K562 (cell line): ENCODE measurements at regions of chr16 and their contacts with region 1.

Region 1: GRCh38 chr16:2500918-2501750 is 12.6 kb upstream of the ATP6V0C start:
- DNase-seq: peak; percentile 81 to 85 (median 84)
- ATAC-seq: peak; percentile 94
- H3K4me3 ChIP-seq: no peak overlapping the region
- H3K27ac ChIP-seq: no peak overlapping the region
- H3K4me1 ChIP-seq: peaks cover 17 to 70% of the 10 kb centered on the region in 2 experiments
- H3K27me3 ChIP-seq: no peaks in the 10 kb centered on the region
- CTCF ChIP-seq: peak; percentile 92 to 95 (median 95)
- EP300 ChIP-seq: no peak
- POLR2A ChIP-seq: no peak
- RAD21 ChIP-seq: peak; percentile 91 to 93

Region 2: DNA sequence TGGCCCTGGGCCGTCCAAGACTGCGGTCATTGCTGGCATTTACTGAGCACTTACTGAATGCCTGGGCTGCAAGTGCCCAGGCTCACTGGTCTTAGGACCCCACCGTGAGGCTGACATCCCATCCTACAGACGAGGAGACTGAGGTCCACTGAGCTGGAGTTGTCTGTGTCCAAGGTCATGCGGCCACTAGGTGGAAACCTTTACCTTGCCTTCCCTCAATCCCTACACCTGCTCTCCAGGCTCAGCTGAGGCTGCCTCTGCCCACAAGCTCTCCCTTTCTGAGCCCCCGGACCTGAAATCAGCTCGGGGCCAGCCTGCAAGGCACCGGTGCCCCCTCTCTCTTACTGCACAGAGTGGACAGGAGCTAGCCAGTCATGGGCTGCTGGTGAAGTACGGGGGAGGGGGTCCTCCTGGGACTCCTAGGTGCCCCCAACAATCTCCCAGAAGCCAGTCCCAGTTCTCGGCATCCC is 306.2 kb before region 1 on chr16:
- CTCF ChIA-PET with region 1: interaction called, 5 read pairs
- POLR2A ChIA-PET with region 1: no interaction called
- in situ Hi-C with region 1: no loop called
- intact Hi-C with region 1: loop called (anchors 5 kb)
- DNase-seq: peak in 3 of 4 experiments; percentile 45 to 83 (median 73)
- ATAC-seq: peak; percentile 90
- H3K4me3 ChIP-seq: no peak overlapping the region
- H3K27ac ChIP-seq: no peak overlapping the region
- H3K4me1 ChIP-seq: peaks cover 3 to 65% of the 10 kb centered on the region in 2 experiments; a peak in 4 of 5 replicates
- H3K27me3 ChIP-seq: peaks cover 0 to 5% of the 10 kb centered on the region in 2 experiments; a peak in 2 of 5 replicates
- CTCF ChIP-seq: peak; percentile 67 to 84 (median 75)
- EP300 ChIP-seq: no peak
- POLR2A ChIP-seq: no peak
- RAD21 ChIP-seq: peak; percentile 67 to 86

Region 3: GRCh38 chr16:2296661-2297505 is 204.3 kb before region 1 on chr16:
- CTCF ChIA-PET with region 1: interaction called, 12 read pairs
- POLR2A ChIA-PET with region 1: interaction called, 4 read pairs
- in situ Hi-C with region 1: no loop called
- intact Hi-C with region 1: loop called (anchors 1 kb)
- DNase-seq: peak; percentile 76 to 87 (median 84)
- ATAC-seq: peak; percentile 98
- H3K4me3 ChIP-seq: no peak overlapping the region
- H3K27ac ChIP-seq: peak overlapping the region; percentile 76
- H3K4me1 ChIP-seq: peaks cover 6 to 24% of the 10 kb centered on the region in 2 experiments; a peak in 4 of 5 replicates
- H3K27me3 ChIP-seq: no peaks in the 10 kb centered on the region
- CTCF ChIP-seq: peak; percentile 79 to 87 (median 86)
- EP300 ChIP-seq: peak; percentile 19; the same call in 1 of the 2 replicates
- POLR2A ChIP-seq: no peak
- RAD21 ChIP-seq: peak; percentile 65 to 84

Region 4: GRCh38 chr16:2340564-2341455 is 160.3 kb before region 1 on chr16 and contains the start of gene ABCA3:
- CTCF ChIA-PET with region 1: interaction called, 9 read pairs
- POLR2A ChIA-PET with region 1: no interaction called
- in situ Hi-C with region 1: no loop called
- intact Hi-C with region 1: loop called (anchors 10 kb)
- DNase-seq: peak; percentile 98 to 99 (median 99)
- ATAC-seq: peak; percentile 90
- H3K4me3 ChIP-seq: peak within 1 kb of the TSS; percentile 96
- H3K27ac ChIP-seq: peak within 1 kb of the TSS; percentile 88
- H3K4me1 ChIP-seq: peaks cover 23 to 43% of the 10 kb centered on the region in 2 experiments
- H3K27me3 ChIP-seq: no peaks in the 10 kb centered on the region
- CTCF ChIP-seq: peak; percentile 98 to 100 (median 99)
- EP300 ChIP-seq: peak; percentile 36; the same call in 1 of the 2 replicates
- POLR2A ChIP-seq: no peak
- RAD21 ChIP-seq: peak; percentile 86 to 89
- polyA plus RNA-seq, gene ABCA3: 0.66 to 0.81 TPM

Region 5: DNA sequence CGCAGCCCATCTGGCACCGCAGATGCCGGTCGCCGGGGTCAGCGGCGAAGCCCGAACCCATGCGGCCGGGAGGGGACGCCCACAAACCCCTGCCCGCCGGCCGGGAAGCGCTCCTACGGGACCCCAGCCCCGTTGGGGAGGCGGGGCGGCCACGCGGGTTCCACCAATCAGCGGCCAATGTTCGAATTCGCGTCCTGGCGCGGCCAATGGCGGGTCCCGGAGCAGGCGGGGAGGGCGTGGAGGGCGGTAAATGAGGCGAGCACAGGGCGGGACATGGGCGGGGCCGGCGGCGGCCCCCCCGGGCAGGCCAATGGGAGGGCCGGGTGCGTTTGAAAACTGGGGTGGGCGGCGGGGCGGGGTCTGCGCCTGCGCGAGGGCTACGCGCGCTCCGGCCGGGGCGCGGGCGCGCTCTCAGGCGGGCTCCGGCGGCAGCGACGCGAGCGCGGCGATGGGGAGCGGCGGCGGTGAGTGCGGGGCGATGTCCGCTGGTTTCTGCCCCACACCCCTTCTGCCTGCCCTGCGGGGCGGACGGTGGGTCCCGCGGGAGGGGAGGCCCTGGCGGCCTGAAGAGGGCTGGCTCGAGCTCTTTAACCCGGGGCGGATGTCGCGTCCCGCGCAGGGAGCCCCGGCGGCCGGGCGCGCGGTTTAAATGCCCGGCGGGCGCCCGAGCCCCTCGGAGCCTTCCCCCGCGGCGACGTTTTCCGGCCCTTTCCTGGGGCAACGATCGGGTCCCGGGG is 71.9 kb before region 1 on chr16 and contains the start of gene CCNF:
- CTCF ChIA-PET with region 1: interaction called, 17 read pairs
- POLR2A ChIA-PET with region 1: no interaction called
- in situ Hi-C with region 1: no loop called
- intact Hi-C with region 1: loop called (anchors 2 kb)
- DNase-seq: peak; percentile 98 to 100 (median 98)
- ATAC-seq: peak; percentile 93
- H3K4me3 ChIP-seq: peak within 1 kb of the TSS; percentile 93
- H3K27ac ChIP-seq: peak within 1 kb of the TSS; percentile 98
- H3K4me1 ChIP-seq: peaks cover 21 to 34% of the 10 kb centered on the region in 2 experiments; a peak in 4 of 5 replicates
- H3K27me3 ChIP-seq: no peaks in the 10 kb centered on the region
- CTCF ChIP-seq: no peak
- EP300 ChIP-seq: no peak
- POLR2A ChIP-seq: peak; percentile 21
- RAD21 ChIP-seq: no peak; a peak in 1 of 4 replicates
- polyA plus RNA-seq, gene CCNF: 4.1 to 5.4 TPM

Region 6: DNA sequence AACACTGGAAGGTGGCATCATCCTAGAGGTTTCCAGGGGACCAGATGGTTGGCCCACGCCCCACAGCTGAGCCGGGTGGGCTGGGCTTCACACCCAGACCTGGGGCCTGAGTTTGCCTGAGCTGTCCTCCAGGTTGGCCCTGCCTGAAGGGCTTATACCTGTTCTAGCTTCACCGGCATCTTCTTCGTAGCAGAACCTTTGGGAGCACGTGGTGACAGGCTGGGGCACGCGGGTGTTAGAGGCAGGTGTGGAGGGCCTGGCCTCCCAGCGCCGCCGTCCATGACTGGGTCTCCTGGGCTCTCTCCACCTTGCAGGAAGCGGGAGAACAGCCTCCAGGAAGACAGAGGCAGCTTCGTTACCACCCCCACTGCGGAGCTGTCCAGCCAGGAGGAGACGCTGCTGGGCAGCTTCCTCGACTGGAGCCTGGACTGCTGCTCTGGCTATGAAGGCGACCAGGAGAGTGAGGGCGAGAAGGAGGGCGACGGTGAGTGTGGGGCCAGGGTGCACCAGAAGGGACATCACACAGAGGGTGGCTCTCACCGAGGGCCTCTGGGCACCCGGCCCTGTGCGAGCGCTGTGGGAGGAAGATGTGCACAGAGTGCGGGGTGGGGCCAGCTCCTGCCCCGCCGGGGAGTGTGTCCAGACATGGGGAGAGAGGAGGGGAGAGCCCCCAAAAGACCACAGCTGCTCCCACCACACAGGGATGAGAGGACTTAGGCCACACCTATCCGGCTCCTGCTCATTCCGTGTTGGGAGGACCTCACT is 45.9 kb before region 1 on chr16:
- CTCF ChIA-PET with region 1: no interaction called
- POLR2A ChIA-PET with region 1: no interaction called
- in situ Hi-C with region 1: no loop called
- intact Hi-C with region 1: no loop called
- DNase-seq: no peak
- ATAC-seq: no peak
- H3K4me3 ChIP-seq: no peak overlapping the region
- H3K27ac ChIP-seq: no peak overlapping the region
- H3K4me1 ChIP-seq: peaks cover 0 to 58% of the 10 kb centered on the region in 2 experiments; a peak in 4 of 5 replicates
- H3K27me3 ChIP-seq: no peaks in the 10 kb centered on the region; a peak in 1 of 5 replicates
- CTCF ChIP-seq: no peak
- EP300 ChIP-seq: no peak
- POLR2A ChIP-seq: no peak
- RAD21 ChIP-seq: no peak

Region 7: GRCh38 chr16:2467521-2468151 is 33.5 kb before region 1 on chr16:
- CTCF ChIA-PET with region 1: no interaction called
- POLR2A ChIA-PET with region 1: interaction called, 3 read pairs
- in situ Hi-C with region 1: no loop called
- intact Hi-C with region 1: loop called (anchors 5 kb)
- DNase-seq: no peak
- ATAC-seq: no peak
- H3K4me3 ChIP-seq: no peak overlapping the region
- H3K27ac ChIP-seq: no peak overlapping the region
- H3K4me1 ChIP-seq: peaks cover 3 to 78% of the 10 kb centered on the region in 2 experiments; a peak in 4 of 5 replicates
- H3K27me3 ChIP-seq: no peaks in the 10 kb centered on the region
- CTCF ChIP-seq: no peak
- EP300 ChIP-seq: no peak
- POLR2A ChIP-seq: no peak
- RAD21 ChIP-seq: no peak